Activated T-helper 2 cell treated with anti-CD3 and anti-CD28 coated beads, Interferon-gamma antibody, Interleukin-2, Interleukin-4, amounts not matched to agents 10 μg/mL and 5 μg/mL and 100 μg/mL, durations not matched to agents 14 hours and 24 hours and 36 hours (primary cell): ENCODE measurements at regions of chr3 and their contacts with region 1.

Region 1: DNA sequence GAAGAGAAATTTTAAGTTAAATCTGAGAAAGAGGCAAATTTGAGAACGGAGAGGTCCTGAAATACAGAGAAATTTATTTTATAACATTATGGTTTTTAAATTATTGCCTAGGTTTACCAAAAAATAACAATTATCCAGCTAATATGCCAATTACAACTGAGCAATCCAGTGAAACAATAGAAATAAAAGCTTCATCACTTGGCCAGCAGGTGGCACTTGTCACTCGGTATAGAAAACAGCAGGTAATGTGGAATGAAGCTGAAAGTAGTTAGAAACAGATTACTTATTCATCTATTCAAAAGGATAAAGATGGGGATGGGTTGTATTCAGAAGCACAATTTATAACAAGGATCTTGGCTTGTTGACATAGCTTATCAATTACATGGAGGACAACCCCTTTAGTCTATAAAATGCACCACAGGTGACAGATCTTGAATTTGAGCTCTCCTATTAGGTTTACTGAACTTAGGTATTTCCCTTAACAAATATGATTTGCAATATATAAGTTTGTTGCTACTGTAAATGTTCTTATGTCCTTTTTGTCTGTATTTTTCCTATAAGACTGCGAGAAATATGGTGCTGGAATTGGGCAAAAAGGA is 70.1 kb upstream of the GUCA1C start:
- DNase-seq: no peak
- H3K4me3 Mint-ChIP-seq: no peak overlapping the region
- H3K27ac Mint-ChIP-seq: no peak overlapping the region
- H3K4me1 Mint-ChIP-seq: no peaks in the 10 kb centered on the region
- H3K27me3 Mint-ChIP-seq: peaks cover 4% of the 10 kb centered on the region

Region 2: GRCh38 chr3:109081746-109082510 is 58.2 kb after region 1 on chr3:
- intact Hi-C with region 1: loop called (anchors 2 kb)
- DNase-seq: no peak
- H3K4me3 Mint-ChIP-seq: no peak overlapping the region
- H3K27ac Mint-ChIP-seq: no peak overlapping the region
- H3K4me1 Mint-ChIP-seq: peaks cover 4% of the 10 kb centered on the region
- H3K27me3 Mint-ChIP-seq: peaks cover 16% of the 10 kb centered on the region

Region 3: DNA sequence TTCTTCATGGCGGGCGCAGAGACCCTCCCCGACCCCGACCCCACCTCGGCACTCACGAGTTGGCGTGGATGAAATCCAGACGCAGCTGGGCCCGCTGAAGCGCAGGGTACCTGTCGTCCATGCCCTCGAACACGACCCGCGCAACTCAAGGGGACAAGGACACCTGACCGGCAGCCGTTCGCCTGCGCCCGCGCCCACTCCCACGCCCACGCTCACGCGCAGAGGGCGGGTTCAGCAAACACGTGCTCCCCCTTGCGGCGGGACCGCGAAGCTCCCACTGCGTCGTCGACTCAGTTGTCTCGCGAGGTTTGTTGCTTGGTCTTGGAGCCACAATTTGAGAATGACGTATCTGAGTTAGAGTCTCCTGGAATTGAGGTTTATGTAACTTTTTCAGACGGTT is 94.2 kb after region 1 on chr3 and contains the start of gene MORC1:
- intact Hi-C with region 1: no loop called
- DNase-seq: no peak
- H3K4me3 Mint-ChIP-seq: no peak within 1 kb of the TSS
- H3K27ac Mint-ChIP-seq: no peak within 1 kb of the TSS
- H3K4me1 Mint-ChIP-seq: no peaks in the 10 kb centered on the region
- H3K27me3 Mint-ChIP-seq: peaks cover 2% of the 10 kb centered on the region
- total RNA-seq, gene MORC1: not detected in 2 replicates